Endothelial cell of umbilical vein (primary cell): ENCODE measurements at regions of chr1 and their contacts with region 1.

Region 1: DNA sequence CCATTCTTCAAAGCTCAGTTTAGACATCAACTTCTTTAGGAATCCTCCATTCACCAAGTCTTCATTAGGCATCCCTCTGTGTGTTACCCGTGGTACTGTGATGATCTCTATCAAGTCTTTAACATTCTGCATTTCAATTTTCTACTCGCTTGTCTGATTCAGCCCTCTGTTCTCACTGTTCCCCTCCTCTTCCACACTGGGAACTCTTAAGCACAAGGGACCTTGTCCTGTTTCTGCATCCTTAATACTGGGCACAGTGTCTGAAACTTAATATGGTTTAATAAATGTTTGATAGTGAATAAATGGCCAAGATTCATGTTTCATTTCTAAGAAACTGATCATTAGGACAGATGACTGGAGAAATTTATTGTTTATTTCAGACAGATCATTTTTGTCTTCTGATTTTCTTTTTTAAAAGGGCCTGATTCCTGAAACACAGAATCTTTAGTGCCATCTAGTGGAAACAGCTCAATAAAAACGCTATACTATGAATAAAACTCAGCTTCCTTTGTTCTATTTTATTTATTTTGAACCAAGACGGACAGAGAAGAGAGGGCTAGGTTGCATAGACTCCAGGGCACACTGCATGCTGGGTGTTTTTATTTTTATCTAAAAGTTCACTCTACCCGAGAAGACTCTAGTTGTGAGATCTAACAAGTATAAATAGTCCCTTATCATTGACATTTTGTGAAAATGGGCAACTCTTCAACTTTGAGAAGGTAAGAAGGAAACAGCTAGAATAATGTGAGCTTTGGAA is 7.0 kb upstream of the TRIM45 start:
- DNase-seq: peak; percentile 68
- H3K4me3 ChIP-seq: no peak overlapping the region
- H3K27ac ChIP-seq: no peak overlapping the region
- H3K4me1 ChIP-seq: no peaks in the 10 kb centered on the region
- H3K27me3 ChIP-seq: peaks cover 11 to 25% of the 10 kb centered on the region in 2 experiments
- CTCF ChIP-seq: peak; percentile 36 to 37
- POLR2A ChIP-seq: no peak

Region 2: DNA sequence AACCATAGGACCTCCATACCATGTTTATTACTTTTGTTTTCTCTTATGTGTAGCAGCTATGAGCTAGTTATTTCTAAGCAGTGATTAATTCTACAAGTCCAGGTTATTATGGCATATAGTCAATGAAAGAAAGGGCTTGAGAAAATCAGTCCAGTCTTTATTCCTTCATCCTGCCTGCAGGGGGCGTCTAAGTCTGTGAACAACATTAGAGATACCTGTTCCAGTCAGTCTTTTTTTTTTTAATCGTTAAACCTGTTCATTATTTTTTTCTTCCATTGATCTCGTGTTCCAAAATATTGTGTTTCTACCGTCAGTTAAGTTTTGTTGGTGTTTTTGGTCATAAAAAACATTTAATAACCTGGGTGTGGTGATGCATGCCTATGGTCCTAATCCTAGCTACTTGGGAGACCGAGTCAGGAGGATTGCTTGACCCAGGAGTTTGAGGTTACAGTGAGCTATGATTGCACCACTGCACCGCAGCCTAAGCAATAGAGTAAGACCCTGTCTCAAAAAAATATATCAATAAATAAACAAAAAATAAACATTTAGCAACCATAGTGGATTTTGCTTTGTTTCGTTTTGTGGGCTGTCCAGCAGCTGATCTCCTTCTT is 403.6 kb before region 1 on chr1:
- CTCF ChIA-PET with region 1: interaction called, 8 read pairs
- POLR2A ChIA-PET with region 1: no interaction called
- dilution Hi-C with region 1: no loop called
- intact Hi-C with region 1: loop called (anchors 5 kb)
- DNase-seq: peak; percentile 47
- H3K4me3 ChIP-seq: no peak overlapping the region
- H3K27ac ChIP-seq: no peak overlapping the region
- H3K4me1 ChIP-seq: peaks cover 8% of the 10 kb centered on the region
- H3K27me3 ChIP-seq: peaks cover 3 to 8% of the 10 kb centered on the region in 2 experiments
- CTCF ChIP-seq: peak; percentile 62 to 69
- POLR2A ChIP-seq: no peak

Region 3: DNA sequence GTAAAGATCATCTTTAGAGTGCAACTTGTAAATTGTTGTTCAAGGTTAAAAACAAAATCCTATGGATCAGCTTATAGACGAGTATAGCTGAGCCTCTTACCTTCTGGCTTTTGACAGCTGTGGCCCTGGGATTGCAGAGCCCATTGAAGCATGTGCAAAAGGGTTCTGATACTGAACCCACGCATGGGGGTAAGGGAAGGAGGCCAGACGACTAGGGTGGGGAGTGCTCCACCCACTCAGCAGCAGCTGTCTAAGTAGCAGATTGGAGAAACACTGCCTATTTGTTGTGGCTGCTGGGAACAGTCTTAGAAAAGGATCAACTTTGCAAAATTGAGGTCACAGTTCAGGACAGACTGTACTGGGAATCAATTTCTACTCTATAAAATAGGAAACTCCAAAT is 110.9 kb before region 1 on chr1:
- CTCF ChIA-PET with region 1: no interaction called
- POLR2A ChIA-PET with region 1: no interaction called
- dilution Hi-C with region 1: no loop called
- intact Hi-C with region 1: no loop called
- DNase-seq: no peak
- H3K4me3 ChIP-seq: no peak overlapping the region
- H3K27ac ChIP-seq: no peak overlapping the region
- H3K4me1 ChIP-seq: no peaks in the 10 kb centered on the region
- H3K27me3 ChIP-seq: peaks cover 0 to 2% of the 10 kb centered on the region in 2 experiments
- CTCF ChIP-seq: no peak
- POLR2A ChIP-seq: no peak

Region 4: GRCh38 chr1:117067533-117068370 is 60.7 kb before region 1 on chr1:
- CTCF ChIA-PET with region 1: interaction called, 490 read pairs
- POLR2A ChIA-PET with region 1: interaction called, 5 read pairs
- dilution Hi-C with region 1: no loop called
- intact Hi-C with region 1: loop called (anchors 1 kb)
- DNase-seq: peak; percentile 51
- H3K4me3 ChIP-seq: no peak overlapping the region
- H3K27ac ChIP-seq: no peak overlapping the region
- H3K4me1 ChIP-seq: no peaks in the 10 kb centered on the region
- H3K27me3 ChIP-seq: no peaks in the 10 kb centered on the region
- CTCF ChIP-seq: peak; percentile 64 to 77
- POLR2A ChIP-seq: no peak

Region 5: DNA sequence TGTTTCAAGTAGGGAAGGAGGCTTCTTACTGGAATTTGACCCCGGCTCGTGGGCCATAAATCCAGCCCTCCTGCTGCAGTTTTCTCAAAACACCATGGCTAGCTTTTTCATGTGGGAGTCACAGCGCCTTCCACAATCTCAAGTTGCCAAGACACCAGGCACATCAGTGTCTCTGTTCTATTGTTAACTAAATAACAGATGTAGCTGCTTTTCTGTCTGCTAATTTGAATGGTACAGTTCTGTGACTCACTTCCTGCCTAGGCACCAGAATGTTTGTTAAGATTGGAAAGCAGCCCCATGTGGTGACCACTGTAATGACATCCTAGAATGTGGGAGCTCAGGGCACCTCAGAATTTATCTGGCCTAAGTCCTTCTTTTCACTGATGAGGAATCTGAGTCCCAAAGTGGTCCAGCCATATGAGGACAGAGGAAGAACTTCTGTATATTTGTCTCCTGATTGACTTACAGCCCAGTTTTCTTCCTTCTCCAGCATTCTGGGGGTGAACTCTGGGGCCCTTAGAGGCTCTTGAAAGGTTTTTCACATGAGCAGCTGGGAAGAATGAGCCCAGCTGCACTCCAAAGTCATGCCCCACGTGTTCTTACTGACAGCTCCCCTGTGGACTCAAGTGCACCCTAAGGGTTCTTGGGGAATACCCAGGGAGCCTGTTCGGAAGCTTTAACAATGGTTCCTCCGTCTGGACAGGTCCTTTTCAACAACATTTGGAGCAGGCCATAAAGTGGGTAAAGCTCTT is 34.5 kb before region 1 on chr1:
- CTCF ChIA-PET with region 1: interaction called, 70 read pairs
- POLR2A ChIA-PET with region 1: no interaction called
- dilution Hi-C with region 1: no loop called
- intact Hi-C with region 1: no loop called
- DNase-seq: peak; percentile 90
- H3K4me3 ChIP-seq: peak overlapping the region in 1 of 3 experiments; percentile 31
- H3K27ac ChIP-seq: peak overlapping the region; percentile 99
- H3K4me1 ChIP-seq: peaks cover 35% of the 10 kb centered on the region
- H3K27me3 ChIP-seq: no peaks in the 10 kb centered on the region
- CTCF ChIP-seq: peak; percentile 36
- POLR2A ChIP-seq: no peak

Region 6: DNA sequence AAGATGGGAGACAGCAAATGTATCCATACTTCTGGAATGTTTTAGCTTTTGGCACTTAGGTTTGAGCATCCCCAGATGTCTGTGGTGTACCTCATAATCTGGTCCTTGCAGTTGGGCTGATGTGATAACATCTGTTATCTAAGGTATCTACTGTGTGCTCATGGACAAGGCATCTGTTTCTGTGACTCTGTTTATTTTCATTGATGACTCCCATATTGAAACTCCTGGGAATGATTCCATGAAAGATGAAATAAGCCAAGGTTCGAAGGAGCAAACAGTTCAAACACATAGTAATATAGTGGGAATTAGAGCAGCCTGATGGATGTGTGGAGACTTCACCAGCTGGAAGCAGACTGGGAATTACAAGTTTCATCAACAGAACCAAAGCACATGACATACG is 13.7 kb after region 1 on chr1:
- CTCF ChIA-PET with region 1: interaction called, 10 read pairs
- POLR2A ChIA-PET with region 1: no interaction called
- dilution Hi-C with region 1: no loop called
- intact Hi-C with region 1: no loop called
- DNase-seq: no peak
- H3K4me3 ChIP-seq: no peak overlapping the region
- H3K27ac ChIP-seq: no peak overlapping the region
- H3K4me1 ChIP-seq: no peaks in the 10 kb centered on the region
- H3K27me3 ChIP-seq: no peaks in the 10 kb centered on the region
- CTCF ChIP-seq: no peak
- POLR2A ChIP-seq: no peak

Region 7: DNA sequence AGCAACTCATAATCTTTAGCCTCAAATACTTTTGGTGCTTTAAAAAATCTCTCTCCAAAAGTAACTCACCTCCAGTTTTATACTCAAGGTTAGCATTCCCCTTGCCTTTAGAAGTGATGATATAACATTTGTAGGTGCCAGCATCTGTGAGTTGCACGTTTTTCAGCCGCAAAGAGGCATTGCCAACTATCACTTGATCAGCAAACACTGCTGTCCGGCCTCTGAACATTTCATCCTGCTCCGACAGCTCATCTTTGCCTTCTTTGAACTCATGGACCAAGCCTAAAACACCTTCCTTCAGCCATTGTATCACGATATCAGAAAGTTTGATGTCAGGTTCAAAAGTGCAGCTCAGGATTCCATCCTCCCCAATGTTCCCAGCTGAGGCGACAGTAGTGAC is 28.0 kb after region 1 on chr1:
- CTCF ChIA-PET with region 1: no interaction called
- POLR2A ChIA-PET with region 1: no interaction called
- dilution Hi-C with region 1: no loop called
- intact Hi-C with region 1: no loop called
- DNase-seq: no peak
- H3K4me3 ChIP-seq: no peak overlapping the region
- H3K27ac ChIP-seq: no peak overlapping the region
- H3K4me1 ChIP-seq: no peaks in the 10 kb centered on the region
- H3K27me3 ChIP-seq: peaks cover 0 to 7% of the 10 kb centered on the region in 2 experiments
- CTCF ChIP-seq: no peak
- POLR2A ChIP-seq: no peak